KBM-7 (cell line): ENCODE measurements at regions of chr13 and their contacts with region 1.

Region 1: DNA sequence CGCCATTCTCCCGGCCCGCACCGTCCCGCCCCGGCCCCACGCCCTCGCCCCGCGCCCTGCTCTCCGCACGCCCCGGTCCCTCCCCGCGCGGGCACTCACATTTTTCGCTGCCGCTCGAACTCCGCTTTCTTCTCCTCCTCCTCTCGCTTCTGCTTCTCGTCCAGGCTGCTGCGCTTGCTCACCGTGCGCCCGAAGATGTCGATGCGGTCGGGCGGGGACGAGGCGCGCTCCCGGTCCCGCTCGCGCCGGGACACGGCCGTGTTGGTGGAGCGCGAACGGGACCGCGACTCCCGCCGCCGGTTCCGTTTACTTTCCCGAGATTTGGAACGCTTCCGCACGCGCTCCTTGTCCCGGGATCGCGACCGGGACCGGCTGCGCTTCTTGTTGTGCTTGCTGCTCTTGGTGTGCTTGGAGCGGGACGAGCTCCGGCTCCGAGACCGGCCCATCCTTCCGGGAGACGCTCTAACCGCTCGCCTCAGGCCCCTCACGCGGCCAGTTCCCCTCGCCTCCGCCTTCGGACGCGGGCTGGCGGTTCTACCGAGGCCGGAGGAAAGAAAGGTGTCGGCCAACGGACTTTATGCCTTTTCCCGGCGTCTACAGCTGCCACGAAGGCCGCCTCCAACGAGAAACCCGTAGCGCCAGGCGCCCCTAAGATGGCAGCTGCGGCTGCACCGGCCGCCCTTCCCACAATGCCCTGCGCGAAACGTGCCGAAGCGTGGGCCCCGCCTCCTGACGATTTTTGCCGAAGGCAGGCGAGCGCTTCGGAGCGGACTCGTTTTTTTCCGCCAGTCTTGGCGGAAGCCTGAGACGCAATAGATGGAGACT is at the start of gene ARGLU1:
- DNase-seq: peak; percentile 94

Region 2: GRCh38 chr13:105655046-105655445 is 912.6 kb before region 1 on chr13:
- in situ Hi-C with region 1: no loop called
- DNase-seq: no peak

Region 3: DNA sequence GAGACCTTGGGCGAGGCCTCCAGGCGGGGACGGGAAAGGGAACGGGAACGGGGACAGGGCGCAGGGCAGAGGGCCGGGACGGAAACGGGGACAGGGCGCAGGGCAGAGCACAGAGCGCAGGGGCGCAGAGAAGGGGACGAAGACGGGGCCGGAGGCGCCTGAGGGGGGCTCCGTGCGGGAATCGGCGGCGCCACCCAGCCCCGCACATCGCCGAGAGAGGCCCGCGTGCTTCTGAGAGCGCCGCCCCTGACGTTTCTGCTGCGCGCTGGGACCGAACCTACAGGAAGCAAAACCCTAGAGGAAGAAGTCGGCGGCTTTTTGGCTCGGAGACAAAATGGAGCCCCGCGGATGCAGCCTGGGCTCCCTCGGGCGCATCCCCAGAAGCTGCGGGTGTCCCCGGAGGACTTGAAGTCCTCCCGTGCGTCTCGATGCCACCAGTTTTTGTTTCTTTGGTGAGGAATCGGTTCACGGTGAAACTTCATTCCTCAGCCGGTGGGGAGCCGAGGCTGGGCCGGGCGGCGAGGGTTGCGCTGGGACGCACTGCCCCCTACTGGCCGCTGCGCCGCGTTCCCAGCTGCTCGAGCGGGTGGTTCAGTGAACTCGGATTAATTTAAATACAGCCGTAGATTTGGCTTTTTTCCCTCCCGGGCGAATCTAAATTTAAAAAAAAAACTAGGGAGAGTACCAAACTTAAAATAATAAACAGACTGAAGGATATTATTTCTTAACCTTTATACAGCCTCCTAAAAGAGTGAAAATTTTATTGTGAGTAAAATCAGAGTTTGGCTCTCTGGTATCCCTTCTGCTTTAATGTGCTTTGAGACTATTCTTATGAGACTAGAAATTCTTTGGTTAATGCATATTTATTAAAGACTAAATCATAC is 350.2 kb after region 1 on chr13:
- in situ Hi-C with region 1: loop called (anchors 25 kb)
- DNase-seq: peak; percentile 90